Naive thymus-derived CD4-positive, alpha-beta T cell (primary cell): ENCODE measurements at regions of chr14 and their contacts with region 1.

Region 1: GRCh38 chr14:89681086-89682018 is 264.3 kb upstream of the FOXN3 start:
- DNase-seq: peak in 8 of 9 donors; percentile 35 to 66 (median 55)
- ATAC-seq: peak; percentile 70
- H3K4me3 ChIP-seq: peak overlapping the region; percentile 53
- H3K4me3 Mint-ChIP-seq: peak overlapping the region; percentile 77 to 92 (median 82)
- H3K27ac ChIP-seq: peak overlapping the region; percentile 54
- H3K27ac Mint-ChIP-seq: peak overlapping the region; percentile 92 to 98 (median 95)
- H3K4me1 ChIP-seq: peaks cover 25 to 42% of the 10 kb centered on the region in 2 donors
- H3K4me1 Mint-ChIP-seq: peaks cover 25 to 64% (median 55%) of the 10 kb centered on the region in 7 donors
- H3K27me3 ChIP-seq: no peaks in the 10 kb centered on the region
- H3K27me3 Mint-ChIP-seq: no peaks in the 10 kb centered on the region

Region 2: DNA sequence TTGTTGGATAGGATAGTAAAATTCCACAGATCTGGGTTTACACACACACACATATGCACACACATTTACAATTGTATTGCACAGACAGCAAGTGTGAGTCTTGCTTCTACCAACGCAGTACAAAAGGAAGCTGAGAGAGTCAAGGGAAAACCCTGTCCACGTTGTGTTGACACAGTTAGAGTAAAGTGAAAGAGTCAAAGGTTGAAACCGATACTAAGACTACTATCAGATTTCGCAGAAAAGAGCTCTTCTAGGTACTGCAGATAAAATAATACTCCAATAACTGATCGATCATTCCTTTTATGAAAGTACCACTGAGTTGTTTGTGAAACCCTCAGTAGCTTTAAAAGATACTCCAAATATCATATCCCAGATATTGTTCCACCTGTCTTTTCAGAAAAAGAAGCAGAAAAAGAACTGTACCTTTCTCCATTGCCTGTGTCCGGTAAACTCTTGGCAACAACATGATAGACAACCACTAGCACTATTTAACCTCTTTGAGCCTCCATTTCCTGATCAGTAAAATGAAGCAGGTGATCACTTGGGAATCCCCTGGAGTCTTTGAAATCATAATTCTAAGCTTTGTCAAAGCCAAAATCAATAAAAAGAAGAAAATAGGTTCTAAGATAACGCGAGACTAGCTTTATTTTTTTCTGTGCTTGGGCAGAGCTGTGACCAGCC is 39.7 kb before region 1 on chr14:
- CTCF ChIA-PET with region 1: no interaction called
- POLR2A ChIA-PET with region 1: interaction called, 3 read pairs
- intact Hi-C with region 1: loop called (anchors 5 kb)
- DNase-seq: peak in 6 of 9 donors; percentile 25 to 52 (median 36)
- ATAC-seq: peak; percentile 88
- H3K4me3 ChIP-seq: peak overlapping the region; percentile 42
- H3K4me3 Mint-ChIP-seq: peak overlapping the region; percentile 58 to 87 (median 74)
- H3K27ac ChIP-seq: peak overlapping the region; percentile 81
- H3K27ac Mint-ChIP-seq: peak overlapping the region; percentile 75 to 99 (median 96)
- H3K4me1 ChIP-seq: peaks cover 13 to 45% of the 10 kb centered on the region in 2 donors
- H3K4me1 Mint-ChIP-seq: peaks cover 23 to 74% (median 60%) of the 10 kb centered on the region in 7 donors
- H3K27me3 ChIP-seq: no peaks in the 10 kb centered on the region
- H3K27me3 Mint-ChIP-seq: no peaks in the 10 kb centered on the region

Region 3: DNA sequence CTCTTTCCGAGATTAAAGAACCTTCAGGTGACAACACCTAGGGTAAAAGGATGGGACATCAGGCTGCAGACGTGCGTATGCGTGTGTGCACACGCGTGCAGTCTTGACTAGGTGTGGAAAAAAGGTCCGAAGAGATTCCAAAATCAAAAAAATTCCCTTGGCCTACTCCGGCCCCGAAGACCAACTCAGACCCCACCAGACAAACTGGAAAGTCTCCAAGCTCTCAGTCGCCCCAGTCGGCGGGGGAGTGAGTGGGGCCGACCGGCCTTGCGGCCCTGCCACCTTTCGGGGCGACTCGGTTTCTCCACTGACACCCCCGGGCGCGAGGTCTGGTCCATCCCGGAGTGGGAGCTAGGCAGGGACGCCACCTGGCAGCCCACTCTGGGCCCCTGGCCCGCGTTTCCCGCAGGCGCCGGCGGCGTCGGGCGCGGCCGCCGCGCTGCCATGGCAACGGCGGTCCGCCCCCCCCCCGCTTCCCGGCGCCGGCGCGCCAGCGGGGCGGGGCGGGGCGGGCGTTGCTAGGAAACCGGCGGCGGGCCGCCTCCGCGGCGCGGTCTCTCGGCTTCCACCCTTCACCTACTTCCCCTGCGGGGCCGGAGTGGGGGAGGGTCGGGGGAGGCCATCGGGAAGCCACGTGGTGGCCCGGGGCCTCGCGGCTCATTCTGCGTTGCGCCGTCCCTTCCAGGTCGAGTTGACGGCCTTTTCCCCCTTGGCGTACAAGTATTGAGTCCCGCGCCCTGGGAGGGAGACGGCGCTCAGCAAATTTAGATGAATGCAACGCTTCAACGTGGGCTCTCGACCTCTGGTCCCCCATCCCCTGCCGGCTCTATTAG is 20.1 kb after region 1 on chr14:
- CTCF ChIA-PET with region 1: interaction called, 4 read pairs
- POLR2A ChIA-PET with region 1: interaction called, 4 read pairs
- intact Hi-C with region 1: loop called (anchors 2 kb)
- DNase-seq: peak; percentile 67 to 88 (median 80)
- ATAC-seq: peak; percentile 95
- H3K4me3 ChIP-seq: peak overlapping the region; percentile 76
- H3K4me3 Mint-ChIP-seq: peak overlapping the region; percentile 73 to 93 (median 88)
- H3K27ac ChIP-seq: peak overlapping the region; percentile 69
- H3K27ac Mint-ChIP-seq: peak overlapping the region; percentile 75 to 98 (median 89)
- H3K4me1 ChIP-seq: peaks cover 12 to 23% of the 10 kb centered on the region in 2 donors
- H3K4me1 Mint-ChIP-seq: peaks cover 16 to 73% (median 59%) of the 10 kb centered on the region in 7 donors
- H3K27me3 ChIP-seq: no peaks in the 10 kb centered on the region
- H3K27me3 Mint-ChIP-seq: no peaks in the 10 kb centered on the region

Region 4: GRCh38 chr14:89792489-89793366 is 111.4 kb after region 1 on chr14:
- CTCF ChIA-PET with region 1: no interaction called
- POLR2A ChIA-PET with region 1: no interaction called
- intact Hi-C with region 1: no loop called
- DNase-seq: no peak
- ATAC-seq: no peak
- H3K4me3 ChIP-seq: no peak overlapping the region
- H3K4me3 Mint-ChIP-seq: no peak overlapping the region
- H3K27ac ChIP-seq: no peak overlapping the region
- H3K27ac Mint-ChIP-seq: peak overlapping the region in 1 of 9 donors; percentile 0
- H3K4me1 ChIP-seq: no peaks in the 10 kb centered on the region
- H3K4me1 Mint-ChIP-seq: no peaks in the 10 kb centered on the region
- H3K27me3 ChIP-seq: no peaks in the 10 kb centered on the region
- H3K27me3 Mint-ChIP-seq: peaks cover 0 to 5% (median 0%) of the 10 kb centered on the region in 5 donors